ENCODE measurements at regions of chr9 and their contacts with region 1.

Region 1: GRCh38 chr9:81595887-81596543 is 93.3 kb downstream of the TLE1 start:
- DNase-seq: peak; percentile 94
- H3K4me3 ChIP-seq: peak overlapping the region in 1 of 3 experiments; percentile 21
- H3K27ac ChIP-seq: peak overlapping the region; percentile 87
- H3K4me1 ChIP-seq: peaks cover 52% of the 10 kb centered on the region
- H3K27me3 ChIP-seq: no peaks in the 10 kb centered on the region
- CTCF ChIP-seq: no peak
- POLR2A ChIP-seq: peak; percentile 22

Region 2: DNA sequence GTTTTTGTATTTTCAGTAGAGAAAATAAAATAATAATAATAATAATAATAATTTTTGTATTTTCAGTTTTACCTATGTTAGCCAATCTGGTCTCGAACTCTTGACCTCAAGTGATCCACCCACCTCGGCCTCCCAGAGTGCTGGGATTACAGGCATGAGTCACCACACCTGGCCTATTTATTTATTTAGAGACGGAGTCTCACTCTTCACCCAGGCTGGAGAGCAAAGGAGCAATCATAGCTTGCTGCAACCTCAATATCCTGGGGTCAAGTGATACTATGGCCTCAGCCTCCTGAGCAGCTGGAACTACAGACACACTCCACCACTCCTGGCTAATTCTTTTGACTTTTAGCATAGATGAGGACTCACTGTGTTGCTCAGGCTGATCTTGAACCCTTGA is 74.1 kb before region 1 on chr9:
- CTCF ChIA-PET with region 1: interaction called, 15 read pairs
- POLR2A ChIA-PET with region 1: no interaction called
- dilution Hi-C with region 1: no loop called
- intact Hi-C with region 1: loop called (anchors 1 kb)
- DNase-seq: no peak
- H3K4me3 ChIP-seq: no peak overlapping the region
- H3K27ac ChIP-seq: no peak overlapping the region
- H3K4me1 ChIP-seq: peaks cover 8% of the 10 kb centered on the region
- H3K27me3 ChIP-seq: no peaks in the 10 kb centered on the region
- CTCF ChIP-seq: no peak
- POLR2A ChIP-seq: no peak

Region 3: DNA sequence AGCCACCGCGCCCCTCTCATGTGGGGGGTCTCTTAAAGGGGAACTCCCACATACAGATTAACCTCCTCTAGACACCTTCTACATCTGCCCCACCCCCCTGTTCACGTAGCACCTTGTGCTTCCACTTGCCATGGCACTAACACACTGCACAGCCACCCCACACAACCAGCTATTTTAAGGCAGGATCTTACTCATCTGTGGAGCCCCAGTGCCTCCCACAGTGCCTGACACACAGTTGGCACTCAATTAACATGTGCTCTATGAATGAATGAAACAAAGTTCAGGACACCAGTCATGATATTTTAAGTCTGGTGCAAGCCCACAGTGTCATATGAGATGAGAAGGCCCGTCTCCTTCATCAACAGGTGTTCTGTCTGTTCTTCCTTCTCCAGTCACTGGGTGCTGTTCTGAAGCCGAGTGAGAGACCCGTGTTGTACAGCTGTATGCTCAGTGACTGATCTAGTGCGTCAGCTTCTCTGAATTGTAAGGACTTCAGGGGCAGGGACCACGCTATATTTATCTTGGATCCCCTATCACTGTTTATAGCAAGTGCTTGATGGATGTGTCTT is 55.8 kb before region 1 on chr9:
- CTCF ChIA-PET with region 1: interaction called, 3 read pairs
- POLR2A ChIA-PET with region 1: interaction called, 4 read pairs
- dilution Hi-C with region 1: no loop called
- intact Hi-C with region 1: loop called (anchors 5 kb)
- DNase-seq: no peak
- H3K4me3 ChIP-seq: no peak overlapping the region
- H3K27ac ChIP-seq: no peak overlapping the region
- H3K4me1 ChIP-seq: peaks cover 8% of the 10 kb centered on the region
- H3K27me3 ChIP-seq: no peaks in the 10 kb centered on the region
- CTCF ChIP-seq: no peak
- POLR2A ChIP-seq: no peak

Region 4: DNA sequence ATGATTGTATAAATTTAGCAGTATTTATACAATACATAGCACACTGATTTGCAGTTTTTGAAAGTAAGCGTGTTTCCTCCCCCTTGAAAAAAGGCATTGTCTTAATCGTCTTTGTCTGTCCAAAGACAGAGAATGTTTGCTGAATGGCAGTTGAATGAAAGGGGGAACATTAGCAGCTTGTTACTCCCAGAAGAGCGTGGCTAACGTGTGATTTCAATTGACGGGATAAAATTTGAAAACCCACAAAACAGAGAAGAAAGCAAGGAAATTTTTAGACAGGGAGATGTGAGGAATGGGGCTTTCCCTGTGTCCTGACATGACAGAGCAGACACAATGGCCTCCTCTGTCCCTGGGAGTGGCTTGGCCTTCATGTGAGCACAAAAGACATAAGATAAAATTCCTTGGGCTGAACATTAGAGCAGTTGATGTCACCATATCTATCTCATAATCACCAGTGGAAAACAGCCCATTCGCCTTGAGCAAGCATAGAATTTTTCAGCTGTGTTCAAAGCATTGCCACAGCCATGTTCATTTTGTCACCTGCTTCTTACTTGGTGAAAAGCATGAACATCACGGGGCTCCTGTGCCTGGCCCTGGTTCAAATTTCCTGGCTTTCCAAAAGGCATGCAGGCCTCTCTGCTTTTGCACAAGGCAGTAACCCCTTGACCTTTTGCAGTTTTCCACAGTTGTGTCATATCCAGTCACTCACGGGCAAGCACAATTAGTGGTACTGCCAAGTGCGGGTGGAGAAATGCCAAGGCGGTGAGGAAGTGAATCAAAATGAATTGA is 33.6 kb before region 1 on chr9:
- CTCF ChIA-PET with region 1: no interaction called
- POLR2A ChIA-PET with region 1: no interaction called
- dilution Hi-C with region 1: no loop called
- intact Hi-C with region 1: loop called (anchors 1 kb)
- DNase-seq: peak; percentile 91
- H3K4me3 ChIP-seq: no peak overlapping the region
- H3K27ac ChIP-seq: peak overlapping the region; percentile 66
- H3K4me1 ChIP-seq: peaks cover 28% of the 10 kb centered on the region
- H3K27me3 ChIP-seq: no peaks in the 10 kb centered on the region
- CTCF ChIP-seq: no peak
- POLR2A ChIP-seq: no peak

Region 5: GRCh38 chr9:81656004-81656403 is 60.0 kb after region 1 on chr9:
- CTCF ChIA-PET with region 1: no interaction called
- POLR2A ChIA-PET with region 1: interaction called, 3 read pairs
- dilution Hi-C with region 1: no loop called
- intact Hi-C with region 1: loop called (anchors 2 kb)
- DNase-seq: peak; percentile 52
- H3K4me3 ChIP-seq: no peak overlapping the region
- H3K27ac ChIP-seq: peak overlapping the region; percentile 64
- H3K4me1 ChIP-seq: peaks cover 36% of the 10 kb centered on the region
- H3K27me3 ChIP-seq: no peaks in the 10 kb centered on the region
- CTCF ChIP-seq: no peak
- POLR2A ChIP-seq: peak; percentile 48

Region 6: GRCh38 chr9:81729135-81729534 is 133.1 kb after region 1 on chr9:
- CTCF ChIA-PET with region 1: no interaction called
- POLR2A ChIA-PET with region 1: no interaction called
- dilution Hi-C with region 1: no loop called
- intact Hi-C with region 1: no loop called
- DNase-seq: no peak
- H3K4me3 ChIP-seq: no peak overlapping the region
- H3K27ac ChIP-seq: no peak overlapping the region
- H3K4me1 ChIP-seq: peaks cover 6% of the 10 kb centered on the region
- H3K27me3 ChIP-seq: no peaks in the 10 kb centered on the region
- CTCF ChIP-seq: no peak
- POLR2A ChIP-seq: no peak

Region 7: DNA sequence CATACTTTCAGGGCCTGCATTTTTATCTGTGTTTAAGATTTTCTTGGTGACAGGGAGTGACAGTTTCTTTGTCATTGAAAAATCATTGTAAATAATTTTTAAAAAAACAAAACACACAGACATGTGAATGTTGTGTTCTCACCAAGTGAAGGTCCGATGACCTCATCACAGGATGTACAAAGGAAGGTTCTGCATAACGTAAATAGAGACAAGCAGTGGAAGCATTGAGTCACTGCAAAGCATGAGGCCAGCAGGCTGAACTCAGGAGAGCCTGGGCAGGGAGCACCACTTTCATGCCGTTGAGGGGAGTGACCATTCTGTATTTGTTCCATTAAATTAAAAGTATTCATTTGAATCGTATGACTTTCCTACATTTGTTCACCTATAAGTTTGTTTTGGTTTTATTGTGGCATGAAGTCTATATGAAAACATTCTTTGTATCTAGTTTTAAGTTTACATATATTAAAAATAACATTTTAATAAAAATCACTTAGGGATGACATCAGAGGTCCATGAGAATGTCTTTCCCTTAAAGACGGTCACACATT is 163.7 kb after region 1 on chr9:
- CTCF ChIA-PET with region 1: no interaction called
- POLR2A ChIA-PET with region 1: no interaction called
- dilution Hi-C with region 1: no loop called
- intact Hi-C with region 1: loop called (anchors 5 kb)
- DNase-seq: peak; percentile 95
- H3K4me3 ChIP-seq: no peak overlapping the region
- H3K27ac ChIP-seq: peak overlapping the region; percentile 91
- H3K4me1 ChIP-seq: peaks cover 11% of the 10 kb centered on the region
- H3K27me3 ChIP-seq: no peaks in the 10 kb centered on the region
- CTCF ChIP-seq: no peak
- POLR2A ChIP-seq: no peak

Region 8: DNA sequence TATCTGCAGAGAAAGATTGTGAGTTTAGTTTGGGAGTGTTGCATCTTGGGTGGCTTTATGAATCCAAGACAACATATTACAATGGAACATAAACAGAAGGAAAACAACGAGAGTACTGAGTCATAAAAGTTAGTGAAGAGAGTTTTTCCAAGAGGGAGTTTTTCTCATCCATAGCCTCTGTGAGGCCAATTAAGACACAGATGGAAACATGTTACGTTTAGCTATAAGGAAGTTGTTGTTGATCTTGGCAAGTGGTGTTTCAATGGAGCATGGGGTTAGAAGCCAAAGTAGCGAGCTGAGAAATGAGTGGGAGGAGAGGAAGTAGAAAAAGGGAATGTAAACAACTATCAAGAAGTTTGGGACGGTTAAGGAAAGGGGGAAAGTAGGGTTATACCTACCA is 278.9 kb after region 1 on chr9:
- CTCF ChIA-PET with region 1: no interaction called
- POLR2A ChIA-PET with region 1: no interaction called
- dilution Hi-C with region 1: no loop called
- intact Hi-C with region 1: loop called (anchors 1 kb)
- DNase-seq: peak; percentile 97
- H3K4me3 ChIP-seq: no peak overlapping the region
- H3K27ac ChIP-seq: peak overlapping the region; percentile 95
- H3K4me1 ChIP-seq: peaks cover 38% of the 10 kb centered on the region
- H3K27me3 ChIP-seq: no peaks in the 10 kb centered on the region
- CTCF ChIP-seq: no peak
- POLR2A ChIP-seq: no peak

Region 9: GRCh38 chr9:82934952-82935351 is 1338.9 kb after region 1 on chr9:
- CTCF ChIA-PET with region 1: no interaction called
- POLR2A ChIA-PET with region 1: no interaction called
- dilution Hi-C with region 1: no loop called
- intact Hi-C with region 1: no loop called
- DNase-seq: peak; percentile 24
- H3K4me3 ChIP-seq: no peak overlapping the region
- H3K27ac ChIP-seq: peak overlapping the region; percentile 55
- H3K4me1 ChIP-seq: peaks cover 5% of the 10 kb centered on the region
- H3K27me3 ChIP-seq: no peaks in the 10 kb centered on the region
- CTCF ChIP-seq: no peak
- POLR2A ChIP-seq: no peak